Naive thymus-derived CD4-positive, alpha-beta T cell (primary cell): ENCODE measurements at regions of chr1 and their contacts with region 1.

Region 1: GRCh38 chr1:150961799-150962198 is 12.8 kb downstream of the CERS2 start:
- DNase-seq: no peak
- ATAC-seq: no peak
- H3K4me3 ChIP-seq: no peak overlapping the region
- H3K4me3 Mint-ChIP-seq: no peak overlapping the region
- H3K27ac ChIP-seq: no peak overlapping the region
- H3K27ac Mint-ChIP-seq: peak overlapping the region in 4 of 9 donors; percentile 31 to 68 (median 42)
- H3K4me1 ChIP-seq: no peaks in the 10 kb centered on the region
- H3K4me1 Mint-ChIP-seq: peaks cover 0 to 12% (median 0%) of the 10 kb centered on the region in 7 donors
- H3K27me3 ChIP-seq: no peaks in the 10 kb centered on the region
- H3K27me3 Mint-ChIP-seq: no peaks in the 10 kb centered on the region

Region 2: GRCh38 chr1:150890033-150890416 is 71.8 kb before region 1 on chr1:
- CTCF ChIA-PET with region 1: no interaction called
- POLR2A ChIA-PET with region 1: no interaction called
- intact Hi-C with region 1: no loop called
- DNase-seq: peak in 6 of 9 donors; percentile 28 to 62 (median 56)
- ATAC-seq: peak; percentile 61
- H3K4me3 ChIP-seq: peak overlapping the region; percentile 5
- H3K4me3 Mint-ChIP-seq: peak overlapping the region; percentile 10 to 81 (median 64)
- H3K27ac ChIP-seq: no peak overlapping the region
- H3K27ac Mint-ChIP-seq: peak overlapping the region in 5 of 9 donors; percentile 2 to 55 (median 42)
- H3K4me1 ChIP-seq: peaks cover 11 to 16% of the 10 kb centered on the region in 2 donors
- H3K4me1 Mint-ChIP-seq: peaks cover 16 to 34% (median 29%) of the 10 kb centered on the region in 7 donors
- H3K27me3 ChIP-seq: no peaks in the 10 kb centered on the region
- H3K27me3 Mint-ChIP-seq: peaks cover 0 to 6% (median 0%) of the 10 kb centered on the region in 5 donors

Region 3: DNA sequence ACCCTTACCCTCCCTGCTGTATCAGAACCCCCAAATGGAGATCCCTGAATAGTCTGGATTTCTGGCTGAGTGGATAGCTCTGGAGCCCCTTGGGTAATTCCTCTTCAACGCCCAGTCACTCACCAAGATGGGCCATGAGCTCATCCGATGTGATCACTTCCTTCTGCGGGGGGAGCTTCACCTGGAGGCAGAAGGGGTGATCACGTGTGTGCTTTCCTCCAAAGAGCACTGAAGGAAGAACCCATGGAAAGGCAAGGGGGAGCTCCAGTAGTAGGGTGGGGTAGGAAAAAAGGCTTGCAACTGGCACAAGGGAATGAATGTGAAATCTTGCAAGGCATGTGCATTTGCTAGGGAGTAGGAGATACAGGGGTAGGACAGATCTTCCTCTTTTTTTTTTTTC is 39.8 kb after region 1 on chr1:
- CTCF ChIA-PET with region 1: no interaction called
- POLR2A ChIA-PET with region 1: no interaction called
- intact Hi-C with region 1: loop called in 1 of 2 experiments (anchors 5 kb)
- DNase-seq: no peak
- ATAC-seq: no peak
- H3K4me3 ChIP-seq: no peak overlapping the region
- H3K4me3 Mint-ChIP-seq: peak overlapping the region; percentile 40 to 100 (median 89)
- H3K27ac ChIP-seq: peak overlapping the region; percentile 77
- H3K27ac Mint-ChIP-seq: peak overlapping the region in 8 of 9 donors; percentile 92 to 97 (median 96)
- H3K4me1 ChIP-seq: peaks cover 11 to 39% of the 10 kb centered on the region in 2 donors
- H3K4me1 Mint-ChIP-seq: peaks cover 33 to 62% (median 59%) of the 10 kb centered on the region in 7 donors
- H3K27me3 ChIP-seq: no peaks in the 10 kb centered on the region
- H3K27me3 Mint-ChIP-seq: no peaks in the 10 kb centered on the region